Heart left ventricle (tissue), 16 donors: ENCODE measurements at regions of chr18 and their contacts with region 1.

Region 1: GRCh38 chr18:59180150-59180845 is 39.7 kb upstream of the GRP start:
- DNase-seq: no peak
- ATAC-seq: no peak
- H3K4me3 ChIP-seq: no peak overlapping the region
- H3K27ac ChIP-seq: no peak overlapping the region
- H3K4me1 ChIP-seq: no peaks in the 10 kb centered on the region
- H3K27me3 ChIP-seq: peaks cover 0 to 12% (median 0%) of the 10 kb centered on the region in 9 donors
- CTCF ChIP-seq: no peak
- POLR2A ChIP-seq: no peak

Region 2: GRCh38 chr18:59096098-59096789 is 84.1 kb before region 1 on chr18:
- intact Hi-C with region 1: loop called in 1 of 10 experiments (anchors 10 kb)
- DNase-seq: no peak
- ATAC-seq: no peak
- H3K4me3 ChIP-seq: no peak overlapping the region
- H3K27ac ChIP-seq: no peak overlapping the region
- H3K4me1 ChIP-seq: no peaks in the 10 kb centered on the region
- H3K27me3 ChIP-seq: peaks cover 0 to 6% (median 0%) of the 10 kb centered on the region in 9 donors
- CTCF ChIP-seq: no peak
- POLR2A ChIP-seq: no peak